Activated naive CD4-positive, alpha-beta T cell treated with anti-CD3 and anti-CD28 coated beads for 36 hours (primary cell): ENCODE measurements at regions of chr4 and their contacts with region 1.

Region 1: DNA sequence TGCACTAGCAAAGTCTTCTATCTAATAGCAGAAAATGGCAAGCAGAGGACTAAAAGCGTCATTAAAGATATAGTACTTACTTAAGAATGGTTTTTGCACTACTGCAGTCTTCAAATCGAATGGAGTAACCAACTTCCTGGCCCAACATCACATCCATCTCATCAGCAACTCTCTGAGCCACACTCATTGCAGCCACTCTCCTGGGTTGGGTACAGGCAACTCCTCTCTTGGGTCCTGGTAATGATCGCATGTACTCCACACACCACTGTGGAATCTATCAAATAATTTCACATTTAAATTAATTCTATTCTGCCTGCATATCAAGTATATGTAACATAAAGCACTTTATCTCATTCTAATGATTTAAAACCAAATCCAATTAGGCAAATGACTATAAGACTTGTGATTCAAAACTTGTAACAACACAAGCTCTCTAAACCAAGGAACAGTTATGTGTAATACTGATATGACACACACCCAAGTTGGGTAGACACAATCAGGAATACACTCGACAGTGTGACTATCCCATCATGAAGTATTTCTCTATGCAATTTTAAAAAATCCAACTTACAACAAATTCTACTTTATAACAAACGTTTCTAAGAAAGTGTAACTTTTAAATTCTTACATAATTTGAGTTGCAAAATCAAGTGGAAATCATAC is 13.6 kb downstream of the DHX15 start:
- DNase-seq: no peak
- H3K4me3 Mint-ChIP-seq: peak overlapping the region; percentile 1
- H3K27ac Mint-ChIP-seq: peak overlapping the region; percentile 43
- H3K4me1 Mint-ChIP-seq: peaks cover 73% of the 10 kb centered on the region
- H3K27me3 Mint-ChIP-seq: no peaks in the 10 kb centered on the region

Region 2: GRCh38 chr4:24419181-24420034 is 151.3 kb before region 1 on chr4:
- CTCF ChIA-PET with region 1: no interaction called
- intact Hi-C with region 1: no loop called
- DNase-seq: peak; percentile 82
- H3K4me3 Mint-ChIP-seq: no peak overlapping the region
- H3K27ac Mint-ChIP-seq: no peak overlapping the region
- H3K4me1 Mint-ChIP-seq: peaks cover 3% of the 10 kb centered on the region
- H3K27me3 Mint-ChIP-seq: peaks cover 9% of the 10 kb centered on the region

Region 3: GRCh38 chr4:24557026-24558025 is 13.4 kb before region 1 on chr4:
- CTCF ChIA-PET with region 1: interaction called, 3 read pairs
- intact Hi-C with region 1: loop called (anchors 1 kb)
- DNase-seq: no peak
- H3K4me3 Mint-ChIP-seq: peak overlapping the region; percentile 29
- H3K27ac Mint-ChIP-seq: peak overlapping the region; percentile 83
- H3K4me1 Mint-ChIP-seq: peaks cover 70% of the 10 kb centered on the region
- H3K27me3 Mint-ChIP-seq: no peaks in the 10 kb centered on the region

Region 4: DNA sequence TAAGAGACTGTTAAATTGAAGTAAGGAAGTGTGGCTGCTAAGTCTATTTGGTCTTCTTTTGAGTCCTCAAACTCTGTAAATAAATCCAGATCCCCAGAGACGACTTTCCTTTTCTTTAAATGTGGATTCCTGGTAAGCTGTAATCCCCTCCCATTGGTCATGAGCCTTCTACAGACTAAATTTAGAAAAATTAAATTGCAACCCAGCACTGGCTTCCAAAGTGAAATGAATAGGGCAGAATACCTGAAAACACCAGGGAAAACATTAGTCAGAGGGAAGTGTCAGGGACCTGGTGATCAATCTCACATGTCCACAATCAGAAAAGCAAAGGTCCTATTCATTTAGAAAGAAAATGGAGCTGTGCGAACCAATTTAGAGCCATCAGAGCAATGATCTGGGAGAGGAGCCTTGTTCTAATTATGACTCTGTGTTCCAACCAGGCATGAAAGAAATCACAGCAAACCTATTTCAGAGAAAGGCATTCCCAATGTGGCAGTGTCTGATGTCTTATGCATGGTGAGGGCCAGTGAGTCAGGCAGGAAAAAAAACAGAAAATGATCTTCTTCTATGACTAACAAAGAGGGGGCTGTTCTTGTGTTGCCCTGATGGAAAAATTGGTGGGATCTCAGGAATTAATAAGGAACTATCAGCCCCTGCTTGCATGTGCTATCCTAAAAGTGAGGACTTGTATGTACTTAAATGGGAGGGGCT is 362.0 kb after region 1 on chr4:
- CTCF ChIA-PET with region 1: no interaction called
- intact Hi-C with region 1: no loop called
- DNase-seq: no peak
- H3K4me3 Mint-ChIP-seq: no peak overlapping the region
- H3K27ac Mint-ChIP-seq: no peak overlapping the region
- H3K4me1 Mint-ChIP-seq: no peaks in the 10 kb centered on the region
- H3K27me3 Mint-ChIP-seq: peaks cover 12% of the 10 kb centered on the region